ENCODE measurements at regions of chr1 and their contacts with region 1.

Region 1: DNA sequence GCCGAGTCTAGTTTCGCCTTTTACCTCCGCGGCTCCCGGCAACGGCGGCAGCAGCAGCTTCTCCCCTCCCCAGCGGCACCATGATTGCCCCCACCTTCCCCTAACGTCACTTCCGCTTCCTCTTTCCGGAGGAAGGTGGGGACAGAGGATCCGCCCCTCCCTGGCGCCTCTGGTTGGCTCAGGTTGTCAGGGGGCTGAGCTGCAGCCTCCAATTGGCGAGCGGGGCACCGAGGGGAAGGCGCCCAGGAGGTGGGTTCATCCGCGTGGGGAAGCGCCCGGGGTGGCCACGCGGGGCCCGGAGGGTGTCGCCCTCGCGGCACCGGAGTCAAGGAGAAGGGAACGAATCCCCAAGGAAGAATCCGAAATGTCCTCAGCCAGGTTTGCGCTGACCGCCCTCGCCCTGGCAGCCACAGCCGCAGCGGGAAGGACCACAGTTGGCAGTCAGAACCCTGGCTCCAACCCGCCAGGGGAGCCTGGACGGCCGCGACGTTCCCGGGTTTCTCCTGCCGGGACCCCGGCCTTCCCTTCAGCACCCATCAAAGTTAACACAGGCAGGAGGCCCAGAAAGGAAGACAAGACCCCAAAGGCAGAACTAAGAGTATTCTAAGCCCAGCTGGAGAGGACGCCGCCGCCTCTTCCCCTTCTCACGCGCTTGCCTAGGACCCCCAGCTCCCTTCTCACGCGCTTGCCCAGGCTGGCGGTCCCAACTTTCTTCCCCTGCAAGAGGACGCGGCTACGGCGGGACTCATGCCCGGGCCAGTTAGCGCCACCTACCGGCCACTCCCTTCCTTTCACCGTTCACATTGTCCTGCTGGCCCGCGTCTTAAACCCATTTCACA is at the start of gene MTF1:
- DNase-seq: peak; percentile 95 to 98 (median 97)
- H3K4me3 ChIP-seq: peak within 1 kb of the TSS; percentile 89
- H3K4me3 Mint-ChIP-seq: peak within 1 kb of the TSS; percentile 89 to 99 (median 97)
- H3K27ac ChIP-seq: peak within 1 kb of the TSS; percentile 94
- H3K27ac Mint-ChIP-seq: peak within 1 kb of the TSS; percentile 77 to 99 (median 97)
- H3K4me1 ChIP-seq: peaks cover 24% of the 10 kb centered on the region
- H3K4me1 Mint-ChIP-seq: peaks cover 29 to 39% (median 36%) of the 10 kb centered on the region in 3 donors
- H3K27me3 ChIP-seq: no peaks in the 10 kb centered on the region
- H3K27me3 Mint-ChIP-seq: no peaks in the 10 kb centered on the region
- total RNA-seq, gene MTF1: 38.0 to 39.1 TPM

Region 2: GRCh38 chr1:37807555-37808368 is 52.0 kb before region 1 on chr1 and contains the starts of genes C1orf122 and YRDC:
- CTCF ChIA-PET with region 1: interaction called, 17 read pairs
- POLR2A ChIA-PET with region 1: interaction called, 11 read pairs
- DNase-seq: peak; percentile 86 to 93 (median 87)
- H3K4me3 ChIP-seq: peak within 1 kb of the TSS; percentile 59
- H3K4me3 Mint-ChIP-seq: peak within 1 kb of the TSS; percentile 94 to 99 (median 94)
- H3K27ac ChIP-seq: peak within 1 kb of the TSS; percentile 87
- H3K27ac Mint-ChIP-seq: peak within 1 kb of the TSS; percentile 95 to 100 (median 97)
- H3K4me1 ChIP-seq: peaks cover 28% of the 10 kb centered on the region
- H3K4me1 Mint-ChIP-seq: peaks cover 27 to 61% (median 40%) of the 10 kb centered on the region in 3 donors
- H3K27me3 ChIP-seq: no peaks in the 10 kb centered on the region
- H3K27me3 Mint-ChIP-seq: no peaks in the 10 kb centered on the region
- total RNA-seq, gene C1orf122: 37.7 to 39.5 TPM
- total RNA-seq, gene YRDC: 72.4 to 80.8 TPM

Region 3: DNA sequence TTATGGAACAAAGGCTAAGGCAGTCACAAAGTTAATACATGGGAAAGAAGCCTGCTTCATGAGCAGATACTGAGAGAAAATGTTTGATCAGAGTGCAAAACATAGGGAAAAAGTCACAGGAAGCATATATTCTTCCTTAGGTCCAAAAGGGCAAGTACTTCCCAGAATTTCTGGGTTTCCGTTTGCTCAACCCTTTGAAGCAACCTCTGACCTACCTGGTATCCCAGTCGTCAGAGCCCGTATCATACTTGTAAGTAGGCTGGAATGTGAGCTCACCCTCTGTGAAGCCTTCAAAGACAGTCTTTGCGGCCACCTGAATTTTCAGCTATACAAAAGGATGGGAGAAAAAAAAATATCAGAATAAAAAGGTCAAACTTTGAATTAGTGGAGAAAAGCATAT is 20.1 kb after region 1 on chr1:
- CTCF ChIA-PET with region 1: interaction called, 10 read pairs
- POLR2A ChIA-PET with region 1: no interaction called
- DNase-seq: no peak
- H3K4me3 ChIP-seq: no peak overlapping the region
- H3K4me3 Mint-ChIP-seq: no peak overlapping the region
- H3K27ac ChIP-seq: no peak overlapping the region
- H3K27ac Mint-ChIP-seq: no peak overlapping the region
- H3K4me1 ChIP-seq: no peaks in the 10 kb centered on the region
- H3K4me1 Mint-ChIP-seq: peaks cover 0 to 4% (median 0%) of the 10 kb centered on the region in 3 donors
- H3K27me3 ChIP-seq: no peaks in the 10 kb centered on the region
- H3K27me3 Mint-ChIP-seq: no peaks in the 10 kb centered on the region